Mammary epithelial cell (primary cell): ENCODE measurements at regions of chr2 and their contacts with region 1.

Region 1: DNA sequence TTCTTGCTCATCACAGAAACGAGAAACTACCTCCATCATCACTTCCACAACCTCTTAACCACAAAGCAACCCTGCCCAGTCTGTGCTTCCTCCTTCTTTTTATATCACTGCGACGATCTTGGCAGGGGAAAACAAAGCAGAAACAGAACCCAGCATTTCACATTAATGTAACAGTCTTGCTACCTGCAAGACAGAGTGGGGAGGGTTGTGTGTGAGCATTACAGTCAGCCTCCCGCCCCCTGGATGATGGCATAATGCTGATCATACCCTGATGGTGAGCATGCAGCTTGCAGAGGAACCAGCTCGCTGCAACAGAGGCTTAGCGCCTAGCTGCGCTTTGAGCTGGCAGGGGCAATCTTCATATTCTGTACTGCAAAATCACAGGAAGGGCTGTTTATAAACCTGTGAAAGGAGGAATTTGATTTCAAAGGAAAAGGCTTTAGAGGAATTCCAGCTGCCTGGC is 376.1 kb downstream of the IRS1 start:
- DNase-seq: peak; percentile 82
- H3K4me3 ChIP-seq: no peak overlapping the region
- H3K27ac ChIP-seq: no peak overlapping the region
- H3K4me1 ChIP-seq: peaks cover 45% of the 10 kb centered on the region
- H3K27me3 ChIP-seq: no peaks in the 10 kb centered on the region
- CTCF ChIP-seq: no peak

Region 2: DNA sequence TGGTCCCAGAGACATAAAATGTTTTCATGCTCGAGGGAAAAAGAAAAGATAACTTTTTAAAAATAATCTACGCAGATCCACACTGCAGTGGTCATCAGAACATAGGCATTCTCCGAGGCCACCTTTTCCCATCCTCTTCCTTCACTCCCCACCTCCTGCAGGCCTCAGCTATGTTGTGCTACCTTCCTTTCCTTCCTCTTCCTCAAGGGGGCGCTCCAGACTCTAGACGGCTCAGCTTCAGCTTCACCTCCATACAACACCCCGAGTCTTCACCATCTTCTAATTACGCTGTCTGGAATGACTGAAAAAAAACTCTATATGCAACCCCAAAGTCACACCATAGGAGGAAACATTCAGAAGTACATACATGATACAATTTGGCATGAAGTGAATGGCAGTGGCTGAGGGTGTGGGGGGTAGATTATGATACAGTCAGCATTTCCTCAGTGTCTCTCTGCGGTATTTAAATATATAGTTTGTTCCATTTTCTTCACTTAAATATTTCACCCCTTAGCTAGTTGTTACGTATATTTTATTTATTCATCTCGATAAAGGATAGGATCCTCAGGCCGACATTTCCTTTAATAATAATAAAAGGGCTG is 207.5 kb before region 1 on chr2:
- CTCF ChIA-PET with region 1: no interaction called
- dilution Hi-C with region 1: no loop called
- in situ Hi-C with region 1: no loop called
- intact Hi-C with region 1: loop called (anchors 5 kb)
- DNase-seq: peak; percentile 21
- H3K4me3 ChIP-seq: no peak overlapping the region
- H3K27ac ChIP-seq: no peak overlapping the region
- H3K4me1 ChIP-seq: peaks cover 21% of the 10 kb centered on the region
- H3K27me3 ChIP-seq: no peaks in the 10 kb centered on the region
- CTCF ChIP-seq: peak; percentile 60 to 78

Region 3: DNA sequence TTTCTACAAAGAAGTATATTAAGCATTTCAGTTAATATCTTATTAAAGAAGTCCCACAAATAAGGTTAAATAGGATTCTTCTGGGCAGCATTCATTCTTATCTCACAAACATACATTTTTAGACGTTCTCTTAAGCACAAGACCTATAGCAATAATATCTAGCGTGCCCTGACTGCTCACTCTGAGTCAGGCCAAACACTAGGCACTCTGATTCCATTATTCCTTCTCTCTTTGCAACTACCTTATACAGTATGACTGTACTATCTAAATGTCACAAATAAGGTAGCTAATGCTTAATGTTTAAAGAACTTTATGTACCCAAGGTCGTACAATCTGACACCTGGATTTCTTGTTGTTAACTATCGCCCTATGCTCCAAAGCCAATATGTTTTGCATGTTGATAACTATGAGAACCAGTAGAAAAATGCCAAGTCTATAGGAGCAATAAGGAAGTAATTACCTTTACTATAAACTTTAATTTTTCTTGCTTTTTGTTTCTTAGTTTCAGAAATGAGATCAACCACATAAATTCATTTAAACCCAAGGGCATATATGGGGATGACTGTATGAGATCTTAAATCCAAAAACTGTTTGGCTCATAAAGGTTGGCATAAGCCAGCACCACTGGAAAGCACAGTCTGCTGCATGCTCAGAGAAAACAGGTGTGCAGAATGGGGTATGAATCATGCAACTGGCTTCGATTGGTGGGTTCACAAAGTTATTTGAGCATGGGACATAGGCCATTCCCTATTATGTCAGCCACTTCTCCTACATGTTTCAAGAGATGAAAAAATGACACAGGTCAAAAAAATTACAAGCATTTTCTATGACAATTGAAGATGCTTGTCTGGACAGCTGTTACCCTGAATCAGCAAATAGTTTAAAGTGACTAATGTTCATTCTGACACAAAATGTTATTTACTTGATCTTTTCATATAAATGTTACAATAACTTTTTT is 24.1 kb after region 1 on chr2:
- CTCF ChIA-PET with region 1: no interaction called
- dilution Hi-C with region 1: no loop called
- in situ Hi-C with region 1: no loop called
- intact Hi-C with region 1: loop called (anchors 1 kb)
- DNase-seq: peak; percentile 93
- H3K4me3 ChIP-seq: no peak overlapping the region
- H3K27ac ChIP-seq: peak overlapping the region; percentile 75
- H3K4me1 ChIP-seq: peaks cover 17% of the 10 kb centered on the region
- H3K27me3 ChIP-seq: no peaks in the 10 kb centered on the region
- CTCF ChIP-seq: no peak

Region 4: GRCh38 chr2:226649871-226650660 is 226.5 kb after region 1 on chr2:
- CTCF ChIA-PET with region 1: no interaction called
- dilution Hi-C with region 1: no loop called
- in situ Hi-C with region 1: no loop called
- intact Hi-C with region 1: loop called (anchors 1 kb)
- DNase-seq: peak; percentile 98
- H3K4me3 ChIP-seq: no peak overlapping the region
- H3K27ac ChIP-seq: peak overlapping the region; percentile 92
- H3K4me1 ChIP-seq: peaks cover 45% of the 10 kb centered on the region
- H3K27me3 ChIP-seq: no peaks in the 10 kb centered on the region
- CTCF ChIP-seq: no peak

Region 5: DNA sequence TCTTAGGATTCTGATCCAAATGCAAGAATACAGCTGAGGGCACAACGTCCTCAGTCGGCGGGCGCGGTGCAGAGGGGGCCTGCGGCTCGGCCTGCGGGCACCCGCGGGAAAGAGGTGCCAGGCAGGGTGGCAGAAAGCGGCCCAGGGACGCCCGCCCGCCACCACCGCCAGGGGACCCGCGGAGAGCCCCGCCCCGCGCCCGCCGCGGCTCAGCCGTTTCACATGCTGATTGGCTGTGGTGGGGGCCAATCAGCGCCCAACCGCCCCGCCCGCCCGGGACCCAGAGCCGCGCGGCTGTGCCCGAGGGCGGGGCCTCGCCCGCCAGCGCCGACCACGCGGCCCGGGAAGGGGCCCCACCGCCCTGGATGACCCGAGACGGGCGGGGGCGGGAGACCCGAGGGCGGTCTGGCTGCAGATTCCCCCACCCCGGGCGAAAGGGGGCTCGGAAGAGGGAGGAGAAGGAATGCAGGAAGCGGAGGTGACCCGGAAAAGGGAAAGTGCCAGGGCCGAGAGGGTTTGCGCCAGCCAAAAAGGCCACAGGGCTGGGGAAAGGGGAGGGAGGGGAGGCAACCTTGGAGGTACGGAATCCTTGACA is 368.1 kb after region 1 on chr2:
- CTCF ChIA-PET with region 1: interaction called, 3 read pairs
- dilution Hi-C with region 1: no loop called
- in situ Hi-C with region 1: no loop called
- intact Hi-C with region 1: loop called (anchors 1 kb)
- DNase-seq: peak; percentile 82
- H3K4me3 ChIP-seq: peak overlapping the region; percentile 82 to 92 (median 85)
- H3K27ac ChIP-seq: peak overlapping the region; percentile 87
- H3K4me1 ChIP-seq: peaks cover 32% of the 10 kb centered on the region
- H3K27me3 ChIP-seq: no peaks in the 10 kb centered on the region
- CTCF ChIP-seq: peak in 1 of 2 donors; percentile 31